ENCODE measurements at regions of chr1 and their contacts with region 1.

Region 1: GRCh38 chr1:101288491-101288944 is 51.7 kb downstream of the S1PR1 start:
- DNase-seq: peak in 1 of 2 donors; percentile 27
- ATAC-seq: peak; percentile 68 to 89 (median 74)
- H3K4me3 ChIP-seq: no peak overlapping the region
- H3K27ac ChIP-seq: no peak overlapping the region
- H3K4me1 ChIP-seq: no peaks in the 10 kb centered on the region
- H3K27me3 ChIP-seq: no peaks in the 10 kb centered on the region
- CTCF ChIP-seq: peak; percentile 91

Region 2: DNA sequence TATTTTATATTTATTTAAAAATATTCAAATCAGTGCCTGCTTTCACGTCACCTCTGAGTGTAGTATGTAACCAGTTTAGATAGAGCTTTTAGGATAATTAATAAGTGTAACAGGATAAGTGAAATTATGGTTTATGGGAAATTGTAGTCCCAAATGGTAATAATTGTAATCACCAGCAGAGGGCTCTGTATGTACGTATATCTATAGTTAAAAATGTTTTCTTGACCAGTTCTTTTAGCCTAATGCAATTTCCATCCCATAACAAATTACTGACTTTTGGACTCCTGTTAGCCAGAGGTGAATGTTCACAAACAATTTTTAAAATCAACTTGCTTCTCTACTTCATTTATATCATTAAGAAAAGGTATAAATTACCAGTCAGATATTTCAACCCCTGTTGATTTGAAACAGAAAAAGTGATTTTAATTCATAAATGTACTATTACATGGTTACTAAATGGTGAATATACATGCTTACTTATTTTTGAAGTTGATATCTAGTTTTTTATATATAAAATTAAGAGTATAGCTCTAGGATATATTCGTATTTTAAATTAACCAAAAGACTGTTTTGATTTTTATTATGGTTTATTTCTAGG is 367.3 kb before region 1 on chr1:
- intact Hi-C with region 1: loop called (anchors 2 to 5 kb)
- DNase-seq: no peak
- ATAC-seq: peak in 2 of 4 donors; percentile 54 to 61
- H3K4me3 ChIP-seq: no peak overlapping the region
- H3K27ac ChIP-seq: no peak overlapping the region
- H3K4me1 ChIP-seq: no peaks in the 10 kb centered on the region
- H3K27me3 ChIP-seq: no peaks in the 10 kb centered on the region
- CTCF ChIP-seq: peak; percentile 79

Measured in psoas muscle (tissue), 8 donors.